ENCODE measurements at regions of chr7 and their contacts with region 1.

Region 1: DNA sequence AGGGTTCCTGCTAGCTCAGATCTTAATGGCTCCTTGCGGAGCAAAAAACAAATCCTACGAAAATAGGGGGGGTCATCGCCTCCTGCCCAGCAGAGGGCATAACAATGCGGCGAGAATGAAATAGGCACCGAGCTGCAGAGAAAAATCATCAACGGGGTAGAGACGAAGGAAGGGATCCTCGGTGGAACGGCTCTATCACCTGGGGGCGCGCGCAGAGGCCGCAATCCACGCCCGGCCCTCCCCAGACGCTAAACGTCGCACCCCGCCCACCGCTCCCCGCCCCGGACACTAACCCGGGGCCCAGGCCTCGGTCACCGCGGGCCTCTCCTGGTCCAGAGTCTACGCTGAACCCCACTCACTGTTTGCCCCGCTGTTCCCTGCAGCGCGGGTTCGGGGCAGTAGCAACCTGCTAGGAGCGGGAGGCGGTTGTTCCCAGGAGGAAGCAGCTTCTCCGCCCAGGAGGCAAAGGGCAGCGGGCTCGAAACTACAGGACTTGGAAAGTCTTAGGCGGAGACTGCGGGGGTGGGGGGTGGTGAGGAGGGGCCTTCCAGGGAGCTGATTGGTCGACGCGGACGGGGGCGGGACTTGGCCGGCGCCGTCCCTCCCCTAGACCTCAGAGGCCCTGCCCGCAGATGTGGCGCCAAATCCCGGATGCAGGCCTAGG is at the start of gene TCAF1:
- DNase-seq: peak; percentile 96
- H3K4me3 ChIP-seq: peak within 1 kb of the TSS; percentile 80 to 87 (median 84)
- H3K27ac ChIP-seq: peak within 1 kb of the TSS; percentile 85
- H3K4me1 ChIP-seq: peaks cover 15% of the 10 kb centered on the region
- H3K27me3 ChIP-seq: no peaks in the 10 kb centered on the region
- CTCF ChIP-seq: peak; percentile 39 to 46
- POLR2A ChIP-seq: peak; percentile 91
- total RNA-seq, gene TCAF1: 48.3 and 51.2 TPM in 2 replicates

Region 2: GRCh38 chr7:143884969-143885559 is 16.7 kb before region 1 on chr7:
- CTCF ChIA-PET with region 1: interaction called, 69 read pairs
- POLR2A ChIA-PET with region 1: interaction called, 10 read pairs
- dilution Hi-C with region 1: no loop called
- intact Hi-C with region 1: loop called (anchors 1 kb)
- DNase-seq: peak; percentile 86
- H3K4me3 ChIP-seq: peak overlapping the region; percentile 57 to 69 (median 67)
- H3K27ac ChIP-seq: peak overlapping the region; percentile 16
- H3K4me1 ChIP-seq: peaks cover 9% of the 10 kb centered on the region
- H3K27me3 ChIP-seq: no peaks in the 10 kb centered on the region
- CTCF ChIP-seq: no peak
- POLR2A ChIP-seq: no peak

Region 3: GRCh38 chr7:143929224-143929920 is 27.6 kb after region 1 on chr7:
- CTCF ChIA-PET with region 1: no interaction called
- POLR2A ChIA-PET with region 1: no interaction called
- dilution Hi-C with region 1: no loop called
- intact Hi-C with region 1: no loop called
- DNase-seq: no peak
- H3K4me3 ChIP-seq: no peak overlapping the region
- H3K27ac ChIP-seq: no peak overlapping the region
- H3K4me1 ChIP-seq: no peaks in the 10 kb centered on the region
- H3K27me3 ChIP-seq: peaks cover 0 to 8% of the 10 kb centered on the region in 2 experiments
- CTCF ChIP-seq: no peak
- POLR2A ChIP-seq: no peak

Region 4: GRCh38 chr7:143979205-143979758 is 77.5 kb after region 1 on chr7:
- CTCF ChIA-PET with region 1: interaction called, 3 read pairs
- POLR2A ChIA-PET with region 1: no interaction called
- dilution Hi-C with region 1: no loop called
- intact Hi-C with region 1: loop called (anchors 1 kb)
- DNase-seq: peak; percentile 38
- H3K4me3 ChIP-seq: no peak overlapping the region
- H3K27ac ChIP-seq: peak overlapping the region; percentile 38
- H3K4me1 ChIP-seq: peaks cover 18% of the 10 kb centered on the region
- H3K27me3 ChIP-seq: no peaks in the 10 kb centered on the region
- CTCF ChIP-seq: no peak
- POLR2A ChIP-seq: no peak

Region 5: DNA sequence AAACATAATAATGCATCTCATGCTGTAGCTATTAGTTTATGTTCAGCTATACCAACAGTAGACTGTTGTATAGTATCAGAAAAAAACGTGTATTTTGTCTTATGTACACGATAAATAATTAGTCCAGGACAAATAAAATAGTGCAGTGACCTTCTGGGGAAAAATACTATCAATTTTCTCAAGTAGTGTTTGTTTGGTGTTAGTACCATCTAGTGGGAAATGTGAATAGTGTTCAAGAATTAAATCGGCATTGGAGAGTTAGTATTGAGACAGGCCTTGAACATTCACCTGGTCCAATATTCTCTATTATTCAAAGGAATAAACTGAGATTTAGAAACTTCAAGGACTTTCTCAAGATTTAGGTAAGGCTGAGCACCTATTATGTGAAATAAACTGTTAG is 125.3 kb after region 1 on chr7:
- CTCF ChIA-PET with region 1: interaction called, 8 read pairs
- POLR2A ChIA-PET with region 1: no interaction called
- dilution Hi-C with region 1: no loop called
- intact Hi-C with region 1: loop called (anchors 2 kb)
- DNase-seq: peak; percentile 37
- H3K4me3 ChIP-seq: no peak overlapping the region
- H3K27ac ChIP-seq: no peak overlapping the region
- H3K4me1 ChIP-seq: no peaks in the 10 kb centered on the region
- H3K27me3 ChIP-seq: no peaks in the 10 kb centered on the region
- CTCF ChIP-seq: peak; percentile 12 to 30
- POLR2A ChIP-seq: no peak

Region 6: GRCh38 chr7:144127703-144128334 is 226.0 kb after region 1 on chr7:
- CTCF ChIA-PET with region 1: interaction called, 28 read pairs
- POLR2A ChIA-PET with region 1: interaction called, 4 read pairs
- dilution Hi-C with region 1: no loop called
- intact Hi-C with region 1: loop called (anchors 1 kb)
- DNase-seq: peak; percentile 79
- H3K4me3 ChIP-seq: no peak overlapping the region
- H3K27ac ChIP-seq: no peak overlapping the region
- H3K4me1 ChIP-seq: no peaks in the 10 kb centered on the region
- H3K27me3 ChIP-seq: no peaks in the 10 kb centered on the region
- CTCF ChIP-seq: peak; percentile 84 to 92
- POLR2A ChIP-seq: no peak

Region 7: DNA sequence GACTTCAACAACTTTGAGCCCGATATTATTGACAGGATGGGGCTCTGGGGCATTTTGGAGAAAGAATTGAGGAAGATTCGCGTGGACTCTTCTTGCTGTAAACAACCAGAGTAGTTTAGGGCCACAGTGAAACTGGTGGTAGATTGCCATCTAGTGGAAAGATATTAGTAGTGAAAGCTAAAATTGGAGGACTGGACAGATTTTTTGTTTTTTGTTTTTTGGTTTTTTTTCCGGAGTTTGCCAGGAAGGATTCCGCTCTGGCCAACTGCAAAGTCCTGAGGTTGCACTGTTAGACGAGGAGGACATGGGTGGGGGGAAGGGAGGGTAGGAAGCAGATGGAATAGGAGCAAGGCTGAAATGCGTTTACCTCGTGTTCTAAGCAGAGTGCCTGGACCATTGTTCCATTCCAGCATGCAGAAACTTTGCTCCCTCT is 490.0 kb after region 1 on chr7:
- CTCF ChIA-PET with region 1: no interaction called
- POLR2A ChIA-PET with region 1: no interaction called
- dilution Hi-C with region 1: no loop called
- intact Hi-C with region 1: loop called (anchors 10 kb)
- DNase-seq: peak; percentile 62
- H3K4me3 ChIP-seq: no peak overlapping the region
- H3K27ac ChIP-seq: no peak overlapping the region
- H3K4me1 ChIP-seq: no peaks in the 10 kb centered on the region
- H3K27me3 ChIP-seq: no peaks in the 10 kb centered on the region
- CTCF ChIP-seq: peak; percentile 44 to 55
- POLR2A ChIP-seq: no peak